Mammary epithelial cell (primary cell): ENCODE measurements at regions of chrX and their contacts with region 1.

Region 1: DNA sequence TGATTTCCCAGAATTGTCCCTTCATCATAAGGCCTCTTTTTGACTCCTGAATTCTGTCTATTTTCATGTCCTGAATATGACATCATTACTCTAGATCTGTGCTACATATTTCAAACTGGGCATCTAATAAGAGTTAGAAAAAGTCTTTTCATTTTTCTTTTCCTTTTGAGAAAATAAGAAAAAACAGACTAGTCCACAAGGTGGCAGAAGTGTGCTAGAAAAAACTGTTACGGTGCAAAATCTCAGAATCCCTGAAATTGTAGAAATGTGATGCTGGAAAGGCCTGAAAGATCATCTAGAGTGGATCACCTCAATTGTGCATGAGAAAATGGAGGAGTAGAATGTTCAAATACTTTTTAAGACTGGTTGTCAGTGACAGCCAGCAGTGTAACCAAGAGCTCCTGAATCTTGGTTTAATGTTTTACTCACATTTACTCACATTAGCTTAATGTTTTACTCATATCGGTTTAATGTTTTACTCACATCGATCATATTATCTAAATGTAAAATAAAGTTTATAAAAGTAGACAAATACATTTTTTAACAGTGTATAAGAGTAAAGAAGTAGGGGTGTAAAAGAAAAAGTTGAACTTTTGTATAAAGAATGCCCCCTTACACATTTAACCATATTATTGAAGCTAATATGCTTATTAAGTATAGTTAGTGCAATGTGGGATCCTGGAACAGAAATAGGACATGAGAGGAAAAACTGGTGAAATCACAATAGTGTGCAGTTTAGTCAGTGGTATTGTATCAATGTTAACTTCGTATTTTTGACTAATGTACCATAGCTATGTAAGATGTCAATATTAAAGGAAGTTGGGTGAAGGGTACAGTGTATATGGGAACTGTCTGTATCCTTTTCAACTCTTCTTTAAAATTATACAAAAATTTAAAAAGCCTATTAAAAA is 15.2 kb downstream of the ASB11 start:
- DNase-seq: no peak
- H3K4me3 ChIP-seq: no peak overlapping the region
- H3K27ac ChIP-seq: no peak overlapping the region
- H3K4me1 ChIP-seq: no peaks in the 10 kb centered on the region
- H3K27me3 ChIP-seq: no peaks in the 10 kb centered on the region
- CTCF ChIP-seq: peak; percentile 53 to 57

Region 2: DNA sequence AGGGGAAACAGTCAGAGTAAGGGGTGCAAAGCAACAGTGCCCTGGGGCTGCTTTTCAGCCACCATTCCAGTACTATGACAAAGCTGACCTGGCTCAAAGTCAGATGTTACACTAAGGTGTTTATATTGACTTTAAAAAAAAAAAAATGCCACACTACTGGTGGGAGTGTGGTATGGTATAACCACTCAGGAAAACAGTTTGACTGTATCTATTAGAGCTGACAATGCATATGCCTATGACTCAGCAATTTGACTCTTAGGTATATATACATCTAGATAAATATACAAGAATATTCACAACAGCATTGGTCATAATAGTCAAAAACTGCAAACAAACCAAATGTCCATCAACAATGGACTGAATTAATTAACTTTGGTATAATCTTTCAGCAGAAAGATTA is 45.3 kb before region 1 on chrX:
- CTCF ChIA-PET with region 1: no interaction called
- dilution Hi-C with region 1: no loop called
- in situ Hi-C with region 1: no loop called
- intact Hi-C with region 1: no loop called
- DNase-seq: no peak
- H3K4me3 ChIP-seq: no peak overlapping the region
- H3K27ac ChIP-seq: no peak overlapping the region
- H3K4me1 ChIP-seq: no peaks in the 10 kb centered on the region
- H3K27me3 ChIP-seq: no peaks in the 10 kb centered on the region
- CTCF ChIP-seq: no peak

Region 3: DNA sequence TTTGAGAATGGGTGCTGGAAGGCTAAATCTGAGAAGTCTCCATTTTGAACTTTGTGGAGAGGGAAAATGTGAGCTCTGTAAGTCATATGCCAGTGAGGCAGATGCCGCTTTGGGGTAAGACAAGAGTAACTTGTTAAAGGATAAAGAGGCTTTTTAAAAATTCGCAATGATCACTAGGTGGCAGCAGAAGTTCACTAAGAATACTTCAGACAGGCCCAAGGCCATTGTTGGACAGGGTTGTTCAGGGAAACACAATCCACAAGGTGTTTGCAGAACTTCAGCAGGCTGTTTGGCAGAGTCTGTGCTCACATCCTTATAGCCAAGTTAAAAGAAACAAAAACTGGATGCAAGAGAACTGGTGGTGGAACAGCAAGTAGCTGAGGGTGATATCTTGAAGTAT is 48.9 kb after region 1 on chrX:
- CTCF ChIA-PET with region 1: no interaction called
- dilution Hi-C with region 1: no loop called
- in situ Hi-C with region 1: no loop called
- intact Hi-C with region 1: loop called (anchors 1 kb)
- DNase-seq: peak; percentile 64
- H3K4me3 ChIP-seq: no peak overlapping the region
- H3K27ac ChIP-seq: no peak overlapping the region
- H3K4me1 ChIP-seq: no peaks in the 10 kb centered on the region
- H3K27me3 ChIP-seq: no peaks in the 10 kb centered on the region
- CTCF ChIP-seq: peak; percentile 57 to 71

Region 4: DNA sequence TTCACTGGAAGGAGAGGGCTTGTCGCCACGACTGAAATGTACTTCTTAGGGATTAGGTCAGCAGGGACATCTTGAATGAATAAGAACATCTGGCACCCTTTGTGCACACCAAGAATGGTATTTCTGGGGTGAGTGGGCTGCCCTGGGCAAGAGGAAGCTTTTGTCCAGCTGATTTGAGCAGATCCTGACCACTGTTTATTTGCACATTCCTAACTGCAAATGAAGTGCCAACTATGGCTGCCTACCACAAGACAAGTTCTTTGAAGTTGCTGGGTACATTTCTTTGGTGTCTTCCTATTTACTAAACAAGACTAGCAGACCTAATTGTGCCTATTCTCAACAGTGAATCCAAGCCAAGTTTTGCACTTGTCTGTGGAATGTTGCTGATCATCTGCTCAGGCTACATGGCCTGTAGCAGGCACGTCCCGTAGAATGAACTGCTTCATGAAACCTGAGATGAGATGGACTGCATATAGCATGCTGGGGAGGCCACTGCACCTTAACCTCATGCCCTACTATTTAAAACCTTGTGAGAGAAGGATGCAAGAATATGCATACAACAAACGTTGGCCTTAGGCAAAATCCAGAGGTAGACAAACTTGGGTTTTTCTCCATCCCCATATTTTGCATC is 147.9 kb after region 1 on chrX:
- CTCF ChIA-PET with region 1: no interaction called
- dilution Hi-C with region 1: no loop called
- in situ Hi-C with region 1: no loop called
- intact Hi-C with region 1: no loop called
- DNase-seq: peak; percentile 23
- H3K4me3 ChIP-seq: no peak overlapping the region
- H3K27ac ChIP-seq: no peak overlapping the region
- H3K4me1 ChIP-seq: peaks cover 25% of the 10 kb centered on the region
- H3K27me3 ChIP-seq: no peaks in the 10 kb centered on the region
- CTCF ChIP-seq: no peak